ENCODE measurements at regions of chr9 and their contacts with region 1.

Region 1: DNA sequence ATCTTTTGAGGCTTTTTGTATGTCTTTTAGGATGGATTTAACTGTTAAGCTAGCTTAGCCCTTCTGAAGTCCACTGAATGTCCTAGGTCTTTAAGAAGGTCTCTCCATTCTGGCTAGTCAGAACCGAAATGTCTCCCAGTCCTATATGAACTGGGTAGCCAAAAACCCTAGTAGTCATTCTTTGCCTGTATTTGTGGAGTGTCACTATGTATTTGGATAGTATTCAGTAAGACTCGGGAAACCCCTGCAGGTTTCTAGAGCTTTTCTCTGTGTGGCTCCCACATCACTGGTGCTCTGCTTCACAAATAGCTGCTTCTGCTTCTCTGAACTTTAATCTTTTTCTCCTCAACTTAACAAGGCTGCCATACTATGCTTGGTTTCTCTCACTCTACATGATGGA is 68.0 kb downstream of the RIC1 start:
- DNase-seq: no peak
- ATAC-seq: no peak
- H3K4me3 ChIP-seq: no peak overlapping the region
- H3K27ac ChIP-seq: peak overlapping the region in 1 of 2 donors; percentile 54
- H3K4me1 ChIP-seq: peaks cover 0 to 7% of the 10 kb centered on the region in 2 donors
- H3K27me3 ChIP-seq: no peaks in the 10 kb centered on the region

Region 2: DNA sequence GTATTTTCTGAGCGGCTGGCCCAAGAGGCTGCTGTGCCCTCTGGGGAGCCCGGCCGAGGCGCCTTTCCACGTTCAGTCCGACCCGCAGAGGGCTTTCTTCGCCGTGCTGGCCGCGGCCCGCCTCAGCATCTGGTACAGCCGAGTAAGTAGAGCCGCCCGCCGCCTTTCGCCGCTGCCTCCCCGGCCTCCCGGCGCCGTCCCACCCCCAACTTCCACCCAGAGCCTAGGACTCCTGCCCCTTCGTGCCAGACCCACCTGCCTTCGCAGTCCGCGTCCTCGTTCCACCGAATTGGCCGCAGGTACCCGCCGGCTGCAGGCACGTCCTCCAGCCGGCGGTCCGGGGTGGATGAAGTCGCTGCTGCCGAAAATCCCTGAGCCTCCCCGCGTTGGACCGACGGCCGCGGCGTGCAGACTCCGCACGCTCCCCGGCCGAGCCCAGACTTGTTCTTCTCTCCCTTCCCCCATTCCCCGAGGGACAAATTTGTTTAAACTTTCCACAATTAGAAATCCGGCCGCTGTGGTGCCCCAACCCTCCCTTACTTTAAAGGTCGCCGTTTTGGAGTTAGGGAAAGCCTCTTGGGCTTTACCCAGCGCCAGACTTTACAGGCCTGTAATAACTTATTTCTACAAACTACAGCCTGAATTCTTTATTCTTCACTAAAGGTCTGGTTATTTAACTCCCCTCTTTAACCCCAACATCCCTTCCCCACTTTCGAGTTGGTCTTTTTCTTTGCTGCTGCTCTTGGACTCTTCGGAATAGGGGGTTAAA is 67.4 kb before region 1 on chr9:
- intact Hi-C with region 1: loop called in 1 of 2 experiments (anchors 10 kb)
- DNase-seq: peak; percentile 74 to 89
- ATAC-seq: peak; percentile 58
- H3K4me3 ChIP-seq: peak overlapping the region; percentile 70 to 90
- H3K27ac ChIP-seq: peak overlapping the region; percentile 81 to 89
- H3K4me1 ChIP-seq: no peaks in the 10 kb centered on the region
- H3K27me3 ChIP-seq: no peaks in the 10 kb centered on the region